IMR-90 (cell line): ENCODE measurements at regions of chr1 and their contacts with region 1.

Region 1: GRCh38 chr1:240189386-240189989 is 97.8 kb downstream of the FMN2 start:
- DNase-seq: peak; percentile 53
- ATAC-seq: no peak
- H3K4me3 ChIP-seq: no peak overlapping the region
- H3K27ac ChIP-seq: no peak overlapping the region
- H3K4me1 ChIP-seq: no peaks in the 10 kb centered on the region
- H3K27me3 ChIP-seq: no peaks in the 10 kb centered on the region; the same call in 1 of the 2 replicates
- CTCF ChIP-seq: peak; percentile 72
- POLR2A ChIP-seq: no peak
- RAD21 ChIP-seq: peak; percentile 68

Region 2: GRCh38 chr1:239719642-239720258 is 469.7 kb before region 1 on chr1:
- CTCF ChIA-PET with region 1: no interaction called
- POLR2A ChIA-PET with region 1: no interaction called
- dilution Hi-C with region 1: no loop called
- in situ Hi-C with region 1: no loop called
- intact Hi-C with region 1: no loop called
- DNase-seq: no peak
- ATAC-seq: no peak
- H3K4me3 ChIP-seq: no peak overlapping the region
- H3K27ac ChIP-seq: no peak overlapping the region
- H3K4me1 ChIP-seq: no peaks in the 10 kb centered on the region
- H3K27me3 ChIP-seq: no peaks in the 10 kb centered on the region
- CTCF ChIP-seq: no peak
- POLR2A ChIP-seq: no peak
- RAD21 ChIP-seq: no peak

Region 3: DNA sequence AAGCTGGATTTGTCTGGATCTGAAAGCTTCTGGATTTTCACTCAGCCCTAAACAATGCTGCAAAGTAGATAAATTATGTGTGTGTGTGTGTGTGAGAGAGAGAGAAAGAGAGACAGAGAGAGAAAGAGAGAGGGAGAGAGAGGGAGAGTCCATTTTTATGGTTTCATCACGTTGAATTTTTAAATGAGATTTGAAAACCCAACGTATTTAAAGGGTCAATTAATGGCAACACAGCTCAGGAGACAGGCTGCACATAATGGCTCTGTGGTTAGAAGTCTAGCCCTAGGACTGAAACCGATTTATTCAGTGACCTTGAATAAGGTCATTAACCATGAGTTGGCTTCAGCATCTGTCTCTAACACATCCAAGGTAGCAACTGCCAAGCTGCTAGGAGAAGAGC is 133.1 kb before region 1 on chr1:
- CTCF ChIA-PET with region 1: no interaction called
- POLR2A ChIA-PET with region 1: no interaction called
- dilution Hi-C with region 1: no loop called
- in situ Hi-C with region 1: no loop called
- intact Hi-C with region 1: no loop called
- DNase-seq: no peak
- ATAC-seq: no peak
- H3K4me3 ChIP-seq: no peak overlapping the region
- H3K27ac ChIP-seq: no peak overlapping the region
- H3K4me1 ChIP-seq: no peaks in the 10 kb centered on the region
- H3K27me3 ChIP-seq: no peaks in the 10 kb centered on the region; the same call in 1 of the 2 replicates
- CTCF ChIP-seq: no peak
- POLR2A ChIP-seq: no peak
- RAD21 ChIP-seq: no peak

Region 4: GRCh38 chr1:240092301-240093119 is 97.0 kb before region 1 on chr1:
- CTCF ChIA-PET with region 1: interaction called, 3 read pairs
- POLR2A ChIA-PET with region 1: no interaction called
- dilution Hi-C with region 1: no loop called
- in situ Hi-C with region 1: no loop called
- intact Hi-C with region 1: loop called (anchors 5 kb)
- DNase-seq: peak; percentile 74
- ATAC-seq: peak; percentile 57
- H3K4me3 ChIP-seq: peak overlapping the region; percentile 89
- H3K27ac ChIP-seq: peak overlapping the region; percentile 33
- H3K4me1 ChIP-seq: peaks cover 2% of the 10 kb centered on the region; the same call in 1 of the 2 replicates
- H3K27me3 ChIP-seq: no peaks in the 10 kb centered on the region
- CTCF ChIP-seq: peak; percentile 35
- POLR2A ChIP-seq: no peak
- RAD21 ChIP-seq: peak; percentile 15; the same call in 1 of the 2 replicates

Region 5: GRCh38 chr1:240350910-240351331 is 161.4 kb after region 1 on chr1:
- CTCF ChIA-PET with region 1: no interaction called
- POLR2A ChIA-PET with region 1: no interaction called
- dilution Hi-C with region 1: no loop called
- in situ Hi-C with region 1: no loop called
- intact Hi-C with region 1: loop called (anchors 5 kb)
- DNase-seq: peak; percentile 96
- ATAC-seq: peak; percentile 87
- H3K4me3 ChIP-seq: no peak overlapping the region
- H3K27ac ChIP-seq: no peak overlapping the region
- H3K4me1 ChIP-seq: peaks cover 17% of the 10 kb centered on the region
- H3K27me3 ChIP-seq: no peaks in the 10 kb centered on the region
- CTCF ChIP-seq: no peak
- POLR2A ChIP-seq: no peak
- RAD21 ChIP-seq: peak; percentile 23; the same call in 1 of the 2 replicates

Region 6: DNA sequence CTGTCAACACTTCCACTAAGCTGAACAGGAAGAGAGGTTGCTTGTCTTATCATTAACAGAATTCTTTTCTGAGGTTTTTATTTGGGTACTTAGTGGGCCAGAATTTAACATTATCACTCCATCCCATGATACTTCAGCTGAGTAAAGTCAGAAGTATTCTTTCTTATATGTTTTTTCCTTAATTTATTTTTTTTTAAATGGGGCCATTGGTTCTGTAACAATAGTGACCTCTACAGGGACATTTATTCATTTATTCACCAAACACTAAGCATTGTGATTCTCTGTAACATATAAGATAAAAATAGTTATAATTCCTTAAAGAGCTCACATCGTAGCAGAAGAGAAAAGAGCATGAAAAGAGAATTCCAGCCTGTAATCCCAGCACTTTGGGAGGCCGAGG is 412.7 kb after region 1 on chr1:
- CTCF ChIA-PET with region 1: interaction called, 3 read pairs
- POLR2A ChIA-PET with region 1: no interaction called
- dilution Hi-C with region 1: no loop called
- in situ Hi-C with region 1: loop called (anchors 10 kb)
- intact Hi-C with region 1: loop called (anchors 2 kb)
- DNase-seq: peak; percentile 35
- ATAC-seq: peak; percentile 77
- H3K4me3 ChIP-seq: no peak overlapping the region
- H3K27ac ChIP-seq: no peak overlapping the region
- H3K4me1 ChIP-seq: peaks cover 4% of the 10 kb centered on the region; the same call in 1 of the 2 replicates
- H3K27me3 ChIP-seq: no peaks in the 10 kb centered on the region
- CTCF ChIP-seq: peak; percentile 53
- POLR2A ChIP-seq: no peak
- RAD21 ChIP-seq: peak; percentile 48

Region 7: DNA sequence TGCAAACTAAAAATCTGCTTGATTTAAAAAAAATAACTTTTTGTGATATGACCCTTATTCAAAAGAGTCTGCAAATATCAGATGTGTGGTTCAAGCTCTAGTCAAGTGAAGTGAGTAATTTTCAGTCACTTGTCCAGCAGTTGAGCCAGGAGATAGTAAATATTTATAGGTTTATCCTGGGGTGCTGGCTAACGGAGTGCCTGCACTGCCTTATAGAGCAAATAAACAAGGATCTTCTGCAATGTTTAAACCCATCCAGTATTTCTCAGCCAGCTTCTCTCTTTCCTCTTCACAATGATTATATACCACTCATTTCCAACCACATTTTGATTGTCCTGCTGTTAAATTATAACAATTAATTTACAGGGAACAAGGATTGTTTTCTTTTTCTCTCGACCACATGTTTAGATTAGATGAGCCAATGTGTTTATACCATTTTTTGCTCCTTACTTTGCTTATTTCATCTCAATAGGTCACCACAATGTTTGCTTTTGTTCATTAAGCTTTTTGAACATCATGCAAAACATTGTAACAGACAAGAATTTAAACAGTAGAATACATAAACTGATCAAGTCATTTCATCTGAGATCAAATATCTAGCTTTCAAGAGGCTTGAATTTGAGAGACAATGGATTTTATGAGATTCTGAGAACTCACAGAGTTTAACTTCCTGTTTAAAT is 482.8 kb after region 1 on chr1:
- CTCF ChIA-PET with region 1: no interaction called
- POLR2A ChIA-PET with region 1: no interaction called
- dilution Hi-C with region 1: no loop called
- in situ Hi-C with region 1: no loop called
- intact Hi-C with region 1: loop called (anchors 5 kb)
- DNase-seq: peak; percentile 51
- ATAC-seq: peak; percentile 91
- H3K4me3 ChIP-seq: no peak overlapping the region
- H3K27ac ChIP-seq: no peak overlapping the region
- H3K4me1 ChIP-seq: 0 out of 2 replicates have a peak, but pooled peaks cover 1% of the 10 kb centered on the region
- H3K27me3 ChIP-seq: peaks cover 1% of the 10 kb centered on the region; the same call in 1 of the 2 replicates
- CTCF ChIP-seq: no peak
- POLR2A ChIP-seq: no peak
- RAD21 ChIP-seq: no peak

Region 8: DNA sequence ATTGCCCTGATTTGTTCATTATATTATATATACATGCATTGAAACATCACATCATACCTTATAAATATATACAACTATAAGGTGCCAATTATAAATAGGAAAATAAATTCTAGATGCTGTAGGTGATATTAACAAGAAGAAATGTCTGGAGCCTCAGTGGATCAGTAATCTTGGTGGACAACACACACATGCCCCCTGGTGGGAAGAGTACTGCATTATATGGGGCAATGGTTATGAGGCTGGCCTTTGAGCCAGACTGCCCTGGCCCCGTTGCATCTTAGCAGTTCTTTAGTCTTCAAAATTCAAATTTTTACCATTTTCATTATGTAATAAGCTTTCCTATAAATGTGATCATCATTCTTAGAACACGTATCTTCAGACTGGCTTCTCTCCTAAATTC is 757.4 kb after region 1 on chr1:
- CTCF ChIA-PET with region 1: no interaction called
- POLR2A ChIA-PET with region 1: no interaction called
- dilution Hi-C with region 1: no loop called
- in situ Hi-C with region 1: no loop called
- intact Hi-C with region 1: loop called (anchors 2 kb)
- DNase-seq: peak; percentile 54
- ATAC-seq: peak; percentile 97
- H3K4me3 ChIP-seq: no peak overlapping the region
- H3K27ac ChIP-seq: no peak overlapping the region
- H3K4me1 ChIP-seq: no peaks in the 10 kb centered on the region
- H3K27me3 ChIP-seq: no peaks in the 10 kb centered on the region; the same call in 1 of the 2 replicates
- CTCF ChIP-seq: peak; percentile 75
- POLR2A ChIP-seq: no peak
- RAD21 ChIP-seq: peak; percentile 80